Dorsolateral prefrontal cortex (tissue), 120 donors: ENCODE measurements at regions of chr1 and their contacts with region 1.

Region 1: GRCh38 chr1:111801071-111801841 is 45.6 kb downstream of the DDX20 start:
- DNase-seq: peak in 1 of 10 donors; percentile 64
- H3K4me3 ChIP-seq: no peak overlapping the region
- H3K27ac ChIP-seq: peak overlapping the region in 1 of 59 donors; percentile 71
- H3K27me3 ChIP-seq: no peaks in the 10 kb centered on the region
- CTCF ChIP-seq: peak in 8 of 56 donors; percentile 6 to 26 (median 18)

Region 2: GRCh38 chr1:111825217-111825616 is 24.0 kb after region 1 on chr1:
- intact Hi-C with region 1: loop called in 1 of 2 experiments (anchors 2 kb)
- DNase-seq: no peak
- H3K4me3 ChIP-seq: no peak overlapping the region
- H3K27ac ChIP-seq: no peak overlapping the region
- H3K27me3 ChIP-seq: no peaks in the 10 kb centered on the region
- CTCF ChIP-seq: no peak